Pancreas (tissue), 10 donors: ENCODE measurements at regions of chr14 and their contacts with region 1.

Region 1: DNA sequence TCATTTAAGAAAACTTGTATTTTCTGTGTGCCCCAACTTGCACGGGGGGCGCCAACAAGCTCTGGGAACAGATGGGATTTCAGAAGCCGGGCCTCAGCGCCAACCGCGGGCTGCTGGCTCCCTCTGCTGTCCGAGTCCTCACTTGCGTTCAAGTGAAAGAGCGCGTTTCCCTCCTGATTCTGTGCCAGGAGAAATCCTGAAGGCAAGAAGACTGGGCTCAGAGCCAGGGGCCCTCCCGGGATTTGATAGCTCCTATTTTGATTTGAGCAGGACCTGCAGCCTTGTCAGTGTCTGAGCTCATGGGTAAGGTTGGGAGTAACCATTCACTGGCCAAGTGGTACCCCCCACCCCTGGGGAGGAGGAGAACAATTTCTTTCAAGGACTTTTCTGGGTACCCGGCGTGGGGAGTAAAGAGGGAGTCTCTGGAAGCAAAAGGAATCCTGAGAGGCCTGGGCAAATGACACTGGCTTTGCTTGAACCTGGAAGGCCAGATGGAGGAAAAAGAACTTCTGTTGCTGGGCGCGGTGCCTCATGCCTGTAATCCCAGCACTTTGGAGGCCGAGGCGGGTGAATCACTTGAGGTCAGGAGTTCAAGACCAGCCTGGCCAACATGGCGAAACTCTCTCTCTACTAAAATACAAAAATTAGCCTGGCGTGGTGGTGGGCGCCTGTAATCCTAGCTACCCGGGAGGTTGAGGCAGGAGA is 179.0 kb upstream of the RGS6 start:
- DNase-seq: peak; percentile 71 to 90 (median 84)
- ATAC-seq: peak; percentile 76 to 93 (median 91)
- H3K4me3 ChIP-seq: peak overlapping the region in 1 of 4 donors; percentile 2
- H3K27ac ChIP-seq: no peak overlapping the region
- H3K4me1 ChIP-seq: no peaks in the 10 kb centered on the region
- H3K27me3 ChIP-seq: no peaks in the 10 kb centered on the region
- CTCF ChIP-seq: peak; percentile 65 to 82 (median 76)

Region 2: GRCh38 chr14:71138448-71139293 is 614.6 kb before region 1 on chr14:
- intact Hi-C with region 1: loop called (anchors 2 to 10 kb)
- DNase-seq: peak; percentile 17 to 76 (median 56)
- ATAC-seq: peak; percentile 67 to 92 (median 82)
- H3K4me3 ChIP-seq: no peak overlapping the region
- H3K27ac ChIP-seq: no peak overlapping the region
- H3K4me1 ChIP-seq: no peaks in the 10 kb centered on the region
- H3K27me3 ChIP-seq: no peaks in the 10 kb centered on the region
- CTCF ChIP-seq: peak; percentile 66 to 87 (median 78)

Region 3: DNA sequence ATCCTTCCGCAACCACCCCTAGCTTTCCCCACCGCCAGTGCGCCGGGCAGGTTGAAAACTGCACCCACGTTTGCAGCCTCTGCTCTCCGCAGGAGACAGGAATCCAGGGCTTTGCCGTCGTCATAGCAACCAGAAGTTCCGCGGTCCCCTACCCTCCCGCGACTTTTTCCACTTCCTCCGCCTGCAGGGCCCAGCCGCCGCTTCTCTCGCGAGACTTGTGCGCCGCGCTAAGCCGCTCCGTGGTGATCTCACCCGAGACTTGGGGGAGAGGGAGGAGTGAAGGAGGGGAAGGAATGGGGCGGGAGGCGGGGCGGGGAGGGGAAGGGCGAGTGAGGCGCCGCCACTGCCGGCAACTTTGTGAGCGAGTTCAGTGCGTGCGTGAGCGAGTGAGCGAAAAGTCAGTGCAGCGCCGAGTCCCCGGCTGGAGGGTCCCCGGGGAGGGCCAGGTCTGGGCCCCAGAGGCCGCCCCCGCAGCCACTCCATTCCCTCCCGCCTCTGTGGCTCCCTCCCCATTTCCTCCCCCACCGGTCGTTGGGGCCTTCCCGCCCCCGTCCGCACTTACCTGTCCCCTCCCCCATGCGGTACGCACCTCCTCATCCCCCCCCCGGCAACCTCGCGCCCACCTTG is 433.1 kb before region 1 on chr14:
- intact Hi-C with region 1: loop called in 1 of 3 experiments (anchors 5 kb)
- DNase-seq: peak; percentile 97 to 99 (median 98)
- ATAC-seq: peak; percentile 89 to 95 (median 92)
- H3K4me3 ChIP-seq: peak within 1 kb of the TSS; percentile 78 to 97 (median 88)
- H3K27ac ChIP-seq: peak within 1 kb of the TSS; percentile 94 to 98 (median 95)
- H3K4me1 ChIP-seq: peaks cover 0 to 14% (median 6%) of the 10 kb centered on the region in 3 donors
- H3K27me3 ChIP-seq: no peaks in the 10 kb centered on the region
- CTCF ChIP-seq: no peak

Region 4: DNA sequence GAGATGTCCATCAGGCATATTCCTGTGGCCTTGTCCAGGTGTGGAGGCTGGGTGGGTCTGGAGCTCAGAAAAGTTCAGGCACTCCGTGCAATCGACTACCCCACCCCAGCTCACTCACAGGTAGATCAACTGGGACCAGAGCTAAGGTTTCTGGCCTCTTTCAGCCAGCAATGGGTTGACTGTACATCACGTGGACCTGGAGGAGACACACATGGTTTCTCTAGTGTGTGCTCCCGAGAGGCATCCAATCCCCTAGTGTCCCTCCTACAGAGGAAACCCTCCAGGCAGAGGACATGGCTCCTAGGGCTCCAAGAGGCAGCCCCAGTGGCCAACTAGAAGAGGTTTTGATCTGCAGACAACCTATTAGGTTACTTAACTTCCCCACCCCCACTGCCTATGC is 59.4 kb after region 1 on chr14:
- intact Hi-C with region 1: no loop called
- DNase-seq: no peak
- ATAC-seq: no peak
- H3K4me3 ChIP-seq: no peak overlapping the region
- H3K27ac ChIP-seq: no peak overlapping the region
- H3K4me1 ChIP-seq: no peaks in the 10 kb centered on the region
- H3K27me3 ChIP-seq: no peaks in the 10 kb centered on the region
- CTCF ChIP-seq: no peak

Region 5: DNA sequence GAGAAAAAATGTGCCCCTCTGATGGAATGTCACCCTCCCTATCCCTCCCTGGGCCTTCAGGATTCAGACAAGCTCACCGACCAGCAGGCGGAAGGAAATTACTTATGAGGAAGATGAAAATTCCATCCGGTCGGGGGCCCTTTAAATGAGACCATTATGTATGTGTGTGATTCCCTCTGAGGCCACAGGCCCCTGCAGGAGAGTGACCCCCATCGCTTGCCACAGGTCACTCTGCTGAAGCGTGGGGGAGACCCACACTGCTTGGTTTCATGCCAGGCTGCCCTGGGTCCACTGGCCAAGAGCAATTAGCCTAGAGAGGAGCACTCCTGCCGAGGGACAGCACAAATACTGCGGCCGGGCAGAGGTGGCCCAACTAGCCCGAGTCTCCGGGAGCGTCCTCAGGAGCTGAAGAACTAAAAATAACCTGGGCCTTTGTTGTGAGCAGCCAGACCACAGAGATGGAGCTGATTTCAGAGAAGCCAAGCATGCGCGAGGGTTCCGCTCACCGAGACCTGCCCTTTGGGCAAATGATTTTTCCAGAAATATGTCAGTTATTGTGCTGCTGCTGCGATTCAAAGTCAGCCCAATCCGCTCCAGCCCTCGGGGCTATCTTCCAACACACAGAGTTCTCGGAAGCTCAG is 864.2 kb after region 1 on chr14:
- intact Hi-C with region 1: no loop called
- DNase-seq: no peak
- ATAC-seq: peak in 1 of 4 donors; percentile 14
- H3K4me3 ChIP-seq: no peak overlapping the region
- H3K27ac ChIP-seq: no peak overlapping the region
- H3K4me1 ChIP-seq: peaks cover 0 to 3% (median 0%) of the 10 kb centered on the region in 3 donors
- H3K27me3 ChIP-seq: no peaks in the 10 kb centered on the region
- CTCF ChIP-seq: no peak